CD4-positive, alpha-beta memory T cell (primary cell): ENCODE measurements at regions of chr13 and their contacts with region 1.

Region 1: GRCh38 chr13:50236898-50237318 is 221.7 kb downstream of the KCNRG start:
- DNase-seq: peak; percentile 52 to 74 (median 56)
- H3K4me3 ChIP-seq: peak overlapping the region in 1 of 2 donors; percentile 55
- H3K4me3 Mint-ChIP-seq: peak overlapping the region; percentile 76 to 93 (median 86)
- H3K27ac ChIP-seq: peak overlapping the region; percentile 77
- H3K27ac Mint-ChIP-seq: peak overlapping the region; percentile 83 to 97 (median 95)
- H3K4me1 ChIP-seq: peaks cover 39% of the 10 kb centered on the region
- H3K4me1 Mint-ChIP-seq: peaks cover 32 to 52% (median 37%) of the 10 kb centered on the region in 4 donors
- H3K27me3 ChIP-seq: no peaks in the 10 kb centered on the region
- H3K27me3 Mint-ChIP-seq: no peaks in the 10 kb centered on the region

Region 2: GRCh38 chr13:50130123-50130946 is 106.6 kb before region 1 on chr13:
- CTCF ChIA-PET with region 1: interaction called, 6 read pairs
- POLR2A ChIA-PET with region 1: interaction called, 61 read pairs
- intact Hi-C with region 1: loop called (anchors 2 kb)
- DNase-seq: peak; percentile 39 to 57 (median 48)
- H3K4me3 ChIP-seq: peak overlapping the region; percentile 45 to 57
- H3K4me3 Mint-ChIP-seq: peak overlapping the region; percentile 84 to 91 (median 90)
- H3K27ac ChIP-seq: peak overlapping the region; percentile 98
- H3K27ac Mint-ChIP-seq: peak overlapping the region; percentile 86 to 99 (median 90)
- H3K4me1 ChIP-seq: peaks cover 72% of the 10 kb centered on the region
- H3K4me1 Mint-ChIP-seq: peaks cover 32 to 69% (median 52%) of the 10 kb centered on the region in 4 donors
- H3K27me3 ChIP-seq: peaks cover 39% of the 10 kb centered on the region
- H3K27me3 Mint-ChIP-seq: peaks cover 19 to 49% of the 10 kb centered on the region in 2 donors

Region 3: DNA sequence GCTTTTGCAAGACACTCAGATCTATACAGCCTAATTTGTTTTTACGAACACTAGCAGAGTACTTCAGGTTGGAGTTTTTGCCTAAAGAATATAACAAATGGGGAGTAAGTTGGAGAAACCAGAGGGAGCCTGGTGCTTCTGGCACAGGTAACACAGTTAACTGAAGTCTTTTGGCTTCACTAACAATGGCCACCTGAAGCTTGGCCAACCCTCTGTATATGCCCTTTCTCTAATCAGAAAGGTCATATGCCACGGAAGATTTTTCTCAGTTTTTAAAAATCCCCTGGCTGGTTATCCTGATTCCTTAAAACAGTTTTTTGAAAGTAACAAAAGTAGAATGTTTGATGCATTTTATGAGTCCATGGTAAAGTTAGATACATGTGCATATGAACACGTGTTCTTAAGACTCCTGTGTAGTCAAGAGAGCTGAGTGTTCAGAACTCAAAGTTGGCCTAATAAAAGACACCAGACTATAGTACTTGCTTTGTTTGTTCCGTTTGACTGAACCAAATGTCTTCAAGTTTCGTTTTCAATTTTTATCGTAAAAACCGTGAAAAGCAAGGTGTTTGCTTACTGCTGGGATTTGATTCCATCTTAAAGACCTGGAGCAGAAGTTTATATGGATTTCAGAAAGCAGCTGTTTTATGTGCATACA is 84.1 kb before region 1 on chr13:
- CTCF ChIA-PET with region 1: interaction called, 4 read pairs
- POLR2A ChIA-PET with region 1: interaction called, 5 read pairs
- intact Hi-C with region 1: loop called (anchors 5 kb)
- DNase-seq: peak in 1 of 5 donors; percentile 6
- H3K4me3 ChIP-seq: peak overlapping the region; percentile 25 to 27
- H3K4me3 Mint-ChIP-seq: peak overlapping the region; percentile 72 to 94 (median 84)
- H3K27ac ChIP-seq: peak overlapping the region; percentile 8
- H3K27ac Mint-ChIP-seq: peak overlapping the region; percentile 49 to 88 (median 81)
- H3K4me1 ChIP-seq: peaks cover 26% of the 10 kb centered on the region
- H3K4me1 Mint-ChIP-seq: peaks cover 17 to 27% (median 22%) of the 10 kb centered on the region in 4 donors
- H3K27me3 ChIP-seq: no peaks in the 10 kb centered on the region
- H3K27me3 Mint-ChIP-seq: no peaks in the 10 kb centered on the region

Region 4: GRCh38 chr13:50222569-50223332 is 14.2 kb before region 1 on chr13:
- CTCF ChIA-PET with region 1: interaction called, 3 read pairs
- POLR2A ChIA-PET with region 1: interaction called, 52 read pairs
- intact Hi-C with region 1: no loop called
- DNase-seq: peak; percentile 15 to 57 (median 21)
- H3K4me3 ChIP-seq: no peak overlapping the region
- H3K4me3 Mint-ChIP-seq: peak overlapping the region; percentile 52 to 85 (median 78)
- H3K27ac ChIP-seq: no peak overlapping the region
- H3K27ac Mint-ChIP-seq: peak overlapping the region in 6 of 7 donors; percentile 40 to 95 (median 84)
- H3K4me1 ChIP-seq: peaks cover 36% of the 10 kb centered on the region
- H3K4me1 Mint-ChIP-seq: peaks cover 30 to 53% (median 44%) of the 10 kb centered on the region in 4 donors
- H3K27me3 ChIP-seq: no peaks in the 10 kb centered on the region
- H3K27me3 Mint-ChIP-seq: peaks cover 2 to 5% of the 10 kb centered on the region in 2 donors

Region 5: GRCh38 chr13:50284540-50284939 is 47.6 kb after region 1 on chr13:
- CTCF ChIA-PET with region 1: no interaction called
- POLR2A ChIA-PET with region 1: no interaction called
- intact Hi-C with region 1: no loop called
- DNase-seq: no peak
- H3K4me3 ChIP-seq: no peak overlapping the region
- H3K4me3 Mint-ChIP-seq: no peak overlapping the region
- H3K27ac ChIP-seq: no peak overlapping the region
- H3K27ac Mint-ChIP-seq: peak overlapping the region in 2 of 7 donors; percentile 3 to 4
- H3K4me1 ChIP-seq: peaks cover 12% of the 10 kb centered on the region
- H3K4me1 Mint-ChIP-seq: peaks cover 13 to 17% (median 14%) of the 10 kb centered on the region in 4 donors
- H3K27me3 ChIP-seq: no peaks in the 10 kb centered on the region
- H3K27me3 Mint-ChIP-seq: no peaks in the 10 kb centered on the region

Region 6: GRCh38 chr13:50365408-50366391 is 128.8 kb after region 1 on chr13:
- CTCF ChIA-PET with region 1: interaction called, 4 read pairs
- POLR2A ChIA-PET with region 1: interaction called, 6 read pairs
- intact Hi-C with region 1: loop called (anchors 2 kb)
- DNase-seq: peak; percentile 49 to 69 (median 57)
- H3K4me3 ChIP-seq: peak overlapping the region; percentile 36 to 37
- H3K4me3 Mint-ChIP-seq: peak overlapping the region; percentile 77 to 87 (median 83)
- H3K27ac ChIP-seq: peak overlapping the region; percentile 68
- H3K27ac Mint-ChIP-seq: peak overlapping the region; percentile 93 to 97 (median 96)
- H3K4me1 ChIP-seq: peaks cover 43% of the 10 kb centered on the region
- H3K4me1 Mint-ChIP-seq: peaks cover 49 to 61% (median 55%) of the 10 kb centered on the region in 4 donors
- H3K27me3 ChIP-seq: no peaks in the 10 kb centered on the region
- H3K27me3 Mint-ChIP-seq: peaks cover 0 to 2% of the 10 kb centered on the region in 2 donors